MCF 10A (cell line): ENCODE measurements at regions of chr3 and their contacts with region 1.

Region 1: DNA sequence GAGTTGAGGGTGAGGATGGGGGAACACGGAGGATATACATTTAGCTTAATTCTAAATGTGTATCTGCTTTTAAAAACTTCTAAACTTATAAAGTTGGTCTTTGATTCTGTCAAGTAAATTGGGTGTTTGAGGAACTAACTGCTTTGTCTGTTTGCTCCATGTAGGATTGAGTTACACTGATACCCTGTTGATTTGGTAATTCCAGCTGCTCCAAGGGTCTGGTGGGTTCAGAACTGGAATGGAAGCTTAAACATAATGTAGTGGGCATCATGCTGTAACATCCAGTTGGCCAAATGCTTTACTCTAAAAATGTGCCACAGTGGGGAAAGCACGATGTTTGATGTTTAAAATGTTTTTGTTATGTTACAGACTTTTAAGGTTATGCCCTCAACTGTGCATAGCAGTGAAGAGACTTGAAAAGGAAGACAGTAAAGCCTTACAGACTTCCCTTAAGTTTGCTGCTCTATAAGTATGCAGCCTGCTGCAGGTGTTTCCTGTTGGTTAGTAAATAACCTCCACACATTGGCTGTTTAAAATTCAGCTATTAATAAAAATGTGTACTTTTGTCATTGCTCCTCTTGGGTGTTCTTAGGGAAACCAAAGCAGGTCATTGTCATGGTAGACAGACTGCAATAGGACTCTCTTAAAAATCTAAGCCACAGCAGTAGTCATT is 5.9 kb upstream of the EDEM1 start:
- DNase-seq: no peak
- H3K4me3 Mint-ChIP-seq: no peak overlapping the region
- H3K27ac Mint-ChIP-seq: no peak overlapping the region
- H3K4me1 Mint-ChIP-seq: peaks cover 7% of the 10 kb centered on the region
- H3K27me3 Mint-ChIP-seq: no peaks in the 10 kb centered on the region
- CTCF ChIP-seq: no peak

Region 2: DNA sequence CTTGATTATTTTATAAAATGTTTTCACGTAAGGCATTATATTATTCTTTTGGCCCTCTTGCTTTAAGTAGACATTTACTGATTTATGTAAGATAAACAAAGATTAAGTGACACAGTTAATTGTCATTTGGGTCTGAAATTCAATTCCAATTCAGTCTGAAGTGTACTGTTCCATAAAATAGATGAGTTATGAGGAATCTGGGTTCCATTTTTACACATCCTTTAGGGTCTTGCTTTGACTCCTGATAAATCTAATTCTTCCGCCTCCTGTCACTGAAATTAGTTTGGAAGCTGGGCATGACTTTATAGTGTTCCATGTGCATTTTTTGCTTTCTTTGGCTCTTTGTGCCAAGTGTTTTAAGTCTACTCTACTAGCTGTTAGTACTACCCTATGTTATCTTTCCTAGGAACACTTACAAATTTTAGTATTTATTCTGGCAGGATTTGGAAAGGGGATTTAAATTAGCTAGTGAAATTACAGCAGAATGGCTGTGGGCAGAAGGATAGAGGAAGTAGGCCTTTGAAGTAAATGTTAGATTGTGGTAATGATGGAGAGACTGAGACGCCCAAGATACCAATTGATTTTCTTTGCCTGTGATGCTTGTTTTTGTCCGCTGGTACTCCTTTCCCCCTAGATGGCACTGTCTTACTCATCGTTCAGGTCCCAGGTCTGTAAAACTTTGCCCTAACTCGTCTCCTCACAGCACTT is 45.2 kb before region 1 on chr3:
- CTCF ChIA-PET with region 1: interaction called, 14 read pairs
- POLR2A ChIA-PET with region 1: interaction called, 33 read pairs
- intact Hi-C with region 1: no loop called
- DNase-seq: peak; percentile 66
- H3K4me3 Mint-ChIP-seq: peak overlapping the region; percentile 11
- H3K27ac Mint-ChIP-seq: peak overlapping the region; percentile 86
- H3K4me1 Mint-ChIP-seq: peaks cover 63% of the 10 kb centered on the region
- H3K27me3 Mint-ChIP-seq: no peaks in the 10 kb centered on the region
- CTCF ChIP-seq: peak; percentile 31